ENCODE measurements at regions of chr14 and their contacts with region 1.

Region 1: GRCh38 chr14:60622917-60623257 is 26.4 kb downstream of the SIX1 start:
- DNase-seq: no peak
- ATAC-seq: no peak
- H3K4me3 ChIP-seq: no peak overlapping the region
- H3K27ac ChIP-seq: peak overlapping the region in 2 of 4 donors; percentile 2 to 14
- H3K4me1 ChIP-seq: peaks cover 39% of the 10 kb centered on the region
- H3K27me3 ChIP-seq: no peaks in the 10 kb centered on the region
- CTCF ChIP-seq: no peak
- POLR2A ChIP-seq: no peak

Region 2: DNA sequence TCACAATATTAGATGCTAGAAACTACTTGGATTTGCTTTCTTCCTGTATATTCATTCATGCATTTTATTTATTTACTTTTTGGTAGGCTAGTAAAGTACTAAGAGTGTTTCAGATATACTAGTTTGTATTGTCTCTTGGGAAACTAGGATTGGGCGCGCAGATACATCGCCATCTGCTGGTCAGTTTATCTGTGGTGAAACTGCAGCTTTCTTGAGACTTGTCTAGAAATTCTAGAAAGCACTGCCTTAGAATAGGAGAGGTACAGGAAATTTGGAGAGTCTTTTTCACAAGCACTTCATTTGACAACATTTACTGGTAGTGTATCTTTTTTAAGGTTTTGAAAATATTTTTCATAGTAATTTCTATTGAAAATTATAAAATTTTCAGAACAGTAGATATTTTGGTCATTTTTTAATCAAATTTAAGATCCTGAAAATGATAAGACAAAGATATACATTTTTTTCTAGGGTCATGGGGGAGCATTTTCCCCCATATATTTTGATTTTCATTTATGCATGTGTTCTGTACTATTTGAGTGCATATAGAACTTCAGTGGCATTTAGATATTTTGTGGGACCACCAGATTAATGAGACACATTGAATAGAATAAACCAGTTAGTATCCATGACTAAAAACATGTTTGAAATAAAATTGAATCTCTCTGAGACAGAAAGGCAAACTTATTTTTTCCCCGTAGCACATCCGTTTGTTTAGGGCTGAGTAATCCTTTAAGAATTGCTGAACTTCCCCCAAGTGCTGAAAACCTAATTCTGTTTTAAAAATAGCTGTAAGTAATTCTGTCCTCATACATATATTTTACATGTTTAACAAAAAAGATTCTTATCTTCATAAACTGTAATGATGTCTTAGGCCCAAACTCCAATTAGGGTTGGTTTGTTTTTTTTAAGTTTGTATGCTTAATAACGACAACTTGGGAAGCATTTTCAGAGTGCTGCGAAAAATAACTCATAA is 402.6 kb after region 1 on chr14:
- intact Hi-C with region 1: loop called (anchors 10 kb)
- DNase-seq: peak; percentile 54 to 73 (median 64)
- ATAC-seq: peak; percentile 73
- H3K4me3 ChIP-seq: no peak overlapping the region
- H3K27ac ChIP-seq: no peak overlapping the region
- H3K4me1 ChIP-seq: no peaks in the 10 kb centered on the region
- H3K27me3 ChIP-seq: no peaks in the 10 kb centered on the region
- CTCF ChIP-seq: peak; percentile 60 to 90 (median 78)
- POLR2A ChIP-seq: no peak

Measured in body of pancreas (tissue), 4 donors.